ENCODE measurements at regions of chr9 and their contacts with region 1.

Region 1: DNA sequence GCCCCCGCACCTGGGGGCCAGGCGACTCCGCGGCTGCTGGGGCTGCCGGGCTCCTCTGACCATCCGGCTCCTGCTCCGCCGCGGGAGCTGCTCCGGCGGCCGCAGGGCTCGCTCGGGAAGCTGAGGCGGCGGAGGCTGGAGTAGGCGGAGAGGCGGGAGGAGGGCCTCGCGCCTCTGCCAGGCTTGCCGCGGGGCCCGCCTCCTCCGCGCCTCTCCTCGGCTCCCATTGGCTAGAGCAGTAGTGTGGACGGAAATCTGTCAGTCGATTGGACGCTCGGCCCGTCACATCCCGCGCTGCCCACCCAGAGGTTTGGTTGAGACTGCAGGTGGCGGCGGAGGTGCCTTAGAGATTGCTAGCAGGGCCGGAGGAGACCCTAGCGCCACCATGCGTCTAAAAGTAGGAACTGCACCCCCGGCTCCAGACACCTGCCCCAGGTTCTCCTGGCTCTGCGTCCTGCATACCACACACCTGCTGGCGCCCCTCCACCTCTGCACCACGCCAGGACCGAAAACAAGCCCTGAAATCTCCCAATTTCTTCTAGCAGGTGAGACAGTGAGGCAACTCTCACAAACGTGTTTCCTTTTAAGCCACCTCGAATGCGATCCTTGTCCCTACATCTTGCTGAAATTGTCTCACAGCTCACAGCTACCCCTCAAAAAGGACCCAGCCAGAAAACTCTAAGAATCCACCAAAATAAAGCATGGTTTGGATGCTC is at the start of gene SCAI:
- DNase-seq: peak; percentile 99
- H3K4me3 Mint-ChIP-seq: peak within 1 kb of the TSS; percentile 95
- H3K27ac Mint-ChIP-seq: peak within 1 kb of the TSS; percentile 85
- H3K4me1 Mint-ChIP-seq: peaks cover 21% of the 10 kb centered on the region
- H3K27me3 Mint-ChIP-seq: no peaks in the 10 kb centered on the region
- CTCF ChIP-seq: peak; percentile 96
- total RNA-seq, gene SCAI: 3.7 and 5.4 TPM in 2 replicates

Region 2: GRCh38 chr9:123860603-123861002 is 1282.9 kb before region 1 on chr9:
- CTCF ChIA-PET with region 1: no interaction called
- POLR2A ChIA-PET with region 1: no interaction called
- intact Hi-C with region 1: no loop called
- DNase-seq: no peak
- H3K4me3 Mint-ChIP-seq: no peak overlapping the region
- H3K27ac Mint-ChIP-seq: no peak overlapping the region
- H3K4me1 Mint-ChIP-seq: no peaks in the 10 kb centered on the region
- H3K27me3 Mint-ChIP-seq: no peaks in the 10 kb centered on the region
- CTCF ChIP-seq: no peak

Region 3: DNA sequence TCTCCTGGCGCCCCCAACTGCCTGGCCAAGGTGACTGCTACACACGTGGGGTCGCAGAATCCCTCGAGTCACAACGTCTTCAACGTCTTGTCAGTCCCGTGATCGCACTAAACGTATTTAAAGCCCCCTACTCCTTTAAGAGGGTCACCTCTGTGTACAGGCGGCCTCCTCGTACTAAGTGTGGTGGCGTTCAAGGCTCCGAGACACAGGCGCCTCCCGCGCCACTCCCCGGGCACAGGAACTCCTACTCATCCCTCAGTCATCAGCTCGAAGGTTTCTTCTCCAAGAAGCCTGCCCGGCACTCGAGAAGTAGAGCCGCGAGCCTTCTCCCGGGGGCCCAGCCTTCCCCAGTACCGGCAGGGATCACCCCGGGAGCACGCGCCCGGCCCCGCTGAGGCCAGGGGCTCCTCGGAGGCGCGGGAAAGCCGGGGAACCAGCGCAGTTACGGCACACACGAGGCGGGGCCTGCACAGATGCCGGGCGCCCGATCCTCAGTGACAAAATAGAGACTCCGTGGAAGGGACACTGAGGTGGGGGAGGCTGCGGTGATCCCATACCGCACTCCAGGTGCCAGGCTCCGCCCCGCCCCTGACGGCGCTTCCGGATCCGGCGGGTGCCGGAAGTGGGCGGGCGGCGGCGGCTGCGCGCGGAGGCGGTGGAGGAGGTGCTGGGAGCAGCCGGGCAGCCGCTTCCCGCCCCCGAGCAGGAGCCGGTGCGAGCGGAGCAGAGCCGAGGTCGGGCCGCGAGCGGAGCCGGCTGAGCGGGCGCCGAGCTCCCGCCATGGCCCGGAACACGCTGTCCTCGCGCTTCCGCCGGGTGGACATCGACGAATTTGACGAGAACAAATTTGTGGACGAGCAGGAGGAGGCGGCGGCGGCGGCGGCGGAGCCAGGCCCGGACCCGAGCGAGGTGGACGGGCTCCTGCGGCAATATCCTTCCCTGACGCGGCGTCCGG is 274.7 kb before region 1 on chr9:
- CTCF ChIA-PET with region 1: no interaction called
- POLR2A ChIA-PET with region 1: interaction called, 3 read pairs
- intact Hi-C with region 1: loop called (anchors 5 kb)
- DNase-seq: peak; percentile 86
- H3K4me3 Mint-ChIP-seq: peak overlapping the region; percentile 95
- H3K27ac Mint-ChIP-seq: peak overlapping the region; percentile 97
- H3K4me1 Mint-ChIP-seq: peaks cover 33% of the 10 kb centered on the region
- H3K27me3 Mint-ChIP-seq: no peaks in the 10 kb centered on the region
- CTCF ChIP-seq: no peak

Region 4: DNA sequence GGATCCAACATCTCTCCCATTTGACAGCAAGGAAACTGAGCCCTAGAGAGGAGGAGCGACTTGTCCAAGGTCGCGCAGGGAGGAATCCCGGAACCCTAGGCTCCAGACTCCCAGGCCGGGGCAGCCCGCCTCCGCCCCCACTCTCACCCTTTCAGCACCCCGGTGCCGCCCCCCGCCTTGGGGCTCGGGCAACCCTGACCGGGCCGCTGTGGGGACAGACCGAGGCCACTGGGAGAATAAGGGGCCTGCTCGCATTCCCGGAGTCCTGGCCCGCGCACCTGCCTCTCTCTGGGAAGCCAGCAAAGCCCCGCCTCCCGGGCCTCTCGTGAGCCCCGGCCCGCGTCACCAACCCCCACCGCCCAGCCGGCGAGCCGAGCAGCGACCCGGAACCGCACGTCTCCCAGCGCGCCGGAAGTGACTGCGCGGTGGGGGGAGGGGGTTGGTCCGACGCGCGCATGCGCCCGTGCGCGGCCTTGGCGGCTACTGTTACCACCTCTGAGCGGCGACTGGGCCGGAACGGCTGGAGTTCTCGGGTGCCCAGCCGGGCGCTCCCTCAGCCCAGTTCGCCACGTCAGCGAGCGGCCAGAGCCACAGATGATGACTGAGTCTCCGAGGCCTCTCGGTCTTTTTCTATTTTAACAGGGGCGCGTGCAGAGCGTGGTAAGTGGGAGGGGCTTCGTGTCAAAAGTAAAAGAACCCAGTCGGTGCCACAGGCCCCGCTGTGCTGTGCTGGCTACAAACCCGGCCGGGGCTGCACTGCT is 202.7 kb before region 1 on chr9 and contains the start of gene GOLGA1:
- CTCF ChIA-PET with region 1: interaction called, 5 read pairs
- POLR2A ChIA-PET with region 1: interaction called, 5 read pairs
- intact Hi-C with region 1: loop called (anchors 1 kb)
- DNase-seq: peak; percentile 92
- H3K4me3 Mint-ChIP-seq: peak within 1 kb of the TSS; percentile 84
- H3K27ac Mint-ChIP-seq: peak within 1 kb of the TSS; percentile 94
- H3K4me1 Mint-ChIP-seq: peaks cover 10% of the 10 kb centered on the region
- H3K27me3 Mint-ChIP-seq: no peaks in the 10 kb centered on the region
- CTCF ChIP-seq: no peak
- total RNA-seq, gene GOLGA1: 22.8 and 29.9 TPM in 2 replicates

Region 5: GRCh38 chr9:125021069-125021468 is 122.5 kb before region 1 on chr9:
- CTCF ChIA-PET with region 1: no interaction called
- POLR2A ChIA-PET with region 1: no interaction called
- intact Hi-C with region 1: no loop called
- DNase-seq: no peak
- H3K4me3 Mint-ChIP-seq: no peak overlapping the region
- H3K27ac Mint-ChIP-seq: no peak overlapping the region
- H3K4me1 Mint-ChIP-seq: no peaks in the 10 kb centered on the region
- H3K27me3 Mint-ChIP-seq: no peaks in the 10 kb centered on the region
- CTCF ChIP-seq: no peak

Region 6: DNA sequence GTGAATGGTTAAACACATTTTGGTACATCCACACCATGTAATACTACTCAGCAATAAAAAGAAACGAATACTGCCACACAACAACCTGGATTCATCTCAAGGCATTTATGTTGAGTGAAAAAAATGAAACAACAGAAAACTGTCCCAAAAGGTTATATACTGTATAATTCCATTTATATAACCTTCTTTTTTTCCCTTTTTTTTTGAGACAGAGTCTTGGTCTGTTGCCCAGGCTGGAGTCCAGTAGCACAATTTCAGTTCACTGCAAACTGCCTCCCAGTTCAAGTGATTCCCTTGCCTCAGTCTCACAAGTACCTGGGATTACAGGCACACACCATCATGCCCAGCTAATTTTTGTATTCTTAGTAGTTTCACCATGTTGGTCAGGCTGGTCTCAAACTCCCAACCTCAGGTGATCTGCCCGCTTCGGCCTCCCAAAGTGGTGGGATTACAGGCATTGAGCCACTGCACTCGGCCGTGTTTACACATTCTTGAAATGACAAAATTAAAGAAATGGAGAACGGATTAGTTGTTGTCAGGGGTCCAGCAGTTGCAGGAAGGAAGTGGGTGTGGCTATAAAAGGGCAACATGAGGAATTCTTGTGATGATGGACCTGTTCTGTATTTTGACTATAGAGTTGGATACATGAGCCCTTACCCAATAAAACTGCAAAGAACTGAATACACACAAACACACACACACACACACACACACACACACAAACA is 28.7 kb after region 1 on chr9:
- CTCF ChIA-PET with region 1: no interaction called
- POLR2A ChIA-PET with region 1: no interaction called
- intact Hi-C with region 1: no loop called
- DNase-seq: no peak
- H3K4me3 Mint-ChIP-seq: no peak overlapping the region
- H3K27ac Mint-ChIP-seq: no peak overlapping the region
- H3K4me1 Mint-ChIP-seq: peaks cover 11% of the 10 kb centered on the region
- H3K27me3 Mint-ChIP-seq: no peaks in the 10 kb centered on the region
- CTCF ChIP-seq: no peak

Region 7: GRCh38 chr9:125374443-125375309 is 231.1 kb after region 1 on chr9:
- CTCF ChIA-PET with region 1: no interaction called
- POLR2A ChIA-PET with region 1: no interaction called
- intact Hi-C with region 1: loop called (anchors 1 kb)
- DNase-seq: peak; percentile 83
- H3K4me3 Mint-ChIP-seq: peak overlapping the region; percentile 56
- H3K27ac Mint-ChIP-seq: no peak overlapping the region
- H3K4me1 Mint-ChIP-seq: peaks cover 12% of the 10 kb centered on the region
- H3K27me3 Mint-ChIP-seq: no peaks in the 10 kb centered on the region
- CTCF ChIP-seq: peak; percentile 82